ENCODE measurements at regions of chr15 and their contacts with region 1.

Region 1: DNA sequence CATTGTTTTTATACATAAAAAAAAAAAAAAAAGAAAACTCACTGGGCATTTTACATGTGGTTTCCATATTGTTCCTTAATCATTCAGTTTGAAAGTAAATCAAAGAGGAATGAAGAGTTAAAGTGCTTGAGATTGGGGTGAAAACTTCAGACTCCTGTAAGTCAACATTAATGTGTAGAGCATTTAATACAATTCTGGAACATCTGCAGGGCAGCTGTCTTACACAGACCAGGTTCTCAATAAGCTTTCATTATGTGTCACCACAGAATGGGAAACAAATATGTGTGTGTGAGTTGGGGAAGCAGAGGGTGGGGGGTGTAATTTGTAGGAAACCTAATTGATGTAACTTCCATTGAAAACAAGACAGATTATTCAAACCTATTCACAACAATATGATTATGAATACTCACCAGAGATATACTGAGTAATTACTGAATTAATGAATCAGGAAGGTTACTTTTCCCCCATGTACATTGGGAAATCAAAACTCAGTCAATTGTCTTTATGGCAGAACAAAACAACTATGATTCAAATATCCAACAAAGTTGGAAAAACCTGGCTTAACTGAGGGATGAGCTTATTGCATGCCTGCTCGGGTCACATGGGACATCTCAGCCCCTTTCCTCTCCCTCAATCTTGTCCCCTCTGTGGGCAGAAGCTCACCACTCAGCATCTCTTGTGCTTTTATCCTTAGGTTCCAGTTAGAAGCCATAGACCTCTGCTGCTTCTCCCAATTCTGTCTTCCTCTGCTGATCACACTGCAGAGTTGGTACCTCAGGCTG is 281.2 kb upstream of the THBS1 start:
- DNase-seq: no peak
- ATAC-seq: no peak
- H3K4me3 ChIP-seq: no peak overlapping the region
- H3K27ac ChIP-seq: no peak overlapping the region
- H3K4me1 ChIP-seq: no peaks in the 10 kb centered on the region
- H3K27me3 ChIP-seq: no peaks in the 10 kb centered on the region
- CTCF ChIP-seq: no peak

Region 2: DNA sequence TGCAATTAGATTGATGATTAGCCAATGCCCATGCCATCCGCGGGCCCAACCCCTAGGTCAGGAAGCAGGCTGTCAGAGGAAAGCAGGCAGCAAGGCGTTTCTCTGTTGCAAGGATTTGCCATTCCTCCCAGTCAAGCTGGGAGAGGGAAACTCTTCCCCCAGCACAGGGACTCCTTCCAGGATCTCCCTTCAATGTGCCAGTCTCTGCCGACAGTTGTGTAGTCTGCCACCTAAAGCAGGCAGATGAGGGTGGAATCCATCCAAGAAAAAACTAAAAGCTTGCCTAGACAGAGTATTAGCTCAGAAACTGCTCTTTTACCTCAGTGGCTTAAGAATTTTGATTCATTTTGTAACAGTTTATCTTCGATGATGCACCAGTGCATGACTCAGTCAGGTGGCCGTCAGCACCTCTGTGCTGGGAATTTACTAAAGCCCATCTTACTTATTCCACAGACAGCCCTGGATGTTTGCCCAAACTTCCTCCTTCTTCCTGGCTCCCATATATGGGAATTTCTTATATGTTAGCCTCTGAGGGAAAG is 220.3 kb before region 1 on chr15:
- CTCF ChIA-PET with region 1: no interaction called
- POLR2A ChIA-PET with region 1: no interaction called
- in situ Hi-C with region 1: no loop called
- intact Hi-C with region 1: no loop called
- DNase-seq: no peak
- ATAC-seq: no peak
- H3K4me3 ChIP-seq: no peak overlapping the region
- H3K27ac ChIP-seq: no peak overlapping the region
- H3K4me1 ChIP-seq: no peaks in the 10 kb centered on the region
- H3K27me3 ChIP-seq: no peaks in the 10 kb centered on the region
- CTCF ChIP-seq: no peak

Region 3: DNA sequence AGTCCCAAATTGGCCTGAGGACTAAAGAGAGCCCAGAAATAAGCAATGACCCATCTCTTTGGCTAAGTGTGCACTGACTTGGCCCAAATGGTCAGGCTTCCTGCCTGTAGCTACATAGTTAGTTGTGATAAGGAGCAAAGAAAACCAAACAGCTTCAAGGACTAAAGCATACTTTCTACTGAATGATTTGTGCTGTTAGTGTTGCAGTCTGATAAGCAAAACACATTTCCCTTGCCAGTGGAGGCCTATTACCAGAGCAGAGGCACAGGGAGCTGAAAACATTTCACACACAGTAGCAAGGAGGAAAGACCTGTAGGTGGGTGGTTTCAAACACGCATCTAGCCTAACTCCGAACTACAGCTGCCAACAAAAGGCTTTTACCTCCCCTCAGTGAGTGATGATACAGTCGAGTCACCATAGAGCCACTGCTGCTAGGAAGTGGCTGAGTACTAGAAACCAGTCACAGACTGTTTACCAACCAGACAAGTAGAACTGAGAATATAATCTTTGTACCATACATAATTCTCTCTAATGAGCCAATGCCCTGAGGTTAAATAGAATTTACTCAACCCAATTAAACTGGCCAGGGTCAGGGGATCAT is 58.9 kb after region 1 on chr15:
- CTCF ChIA-PET with region 1: no interaction called
- POLR2A ChIA-PET with region 1: no interaction called
- in situ Hi-C with region 1: no loop called
- intact Hi-C with region 1: loop called (anchors 10 kb)
- DNase-seq: no peak
- ATAC-seq: no peak
- H3K4me3 ChIP-seq: no peak overlapping the region
- H3K27ac ChIP-seq: no peak overlapping the region
- H3K4me1 ChIP-seq: no peaks in the 10 kb centered on the region
- H3K27me3 ChIP-seq: no peaks in the 10 kb centered on the region
- CTCF ChIP-seq: no peak

Measured in Panc1 (cell line).